ENCODE measurements at regions of chr11 and their contacts with region 1.

Region 1: GRCh38 chr11:102564110-102564509 is 33.6 kb upstream of the MMP7 start:
- DNase-seq: peak in 1 of 2 experiments; percentile 96
- H3K4me3 ChIP-seq: no peak overlapping the region
- H3K27ac ChIP-seq: peak overlapping the region; percentile 94
- H3K4me1 ChIP-seq: peaks cover 16% of the 10 kb centered on the region
- H3K27me3 ChIP-seq: no peaks in the 10 kb centered on the region
- CTCF ChIP-seq: no peak

Region 2: GRCh38 chr11:102546923-102547471 is 17.1 kb before region 1 on chr11:
- CTCF ChIA-PET with region 1: interaction called, 18 read pairs
- POLR2A ChIA-PET with region 1: no interaction called
- intact Hi-C with region 1: loop called (anchors 1 kb)
- DNase-seq: no peak
- H3K4me3 ChIP-seq: no peak overlapping the region
- H3K27ac ChIP-seq: no peak overlapping the region
- H3K4me1 ChIP-seq: peaks cover 39% of the 10 kb centered on the region
- H3K27me3 ChIP-seq: no peaks in the 10 kb centered on the region
- CTCF ChIP-seq: no peak

Region 3: GRCh38 chr11:102553835-102554282 is 10.3 kb before region 1 on chr11:
- CTCF ChIA-PET with region 1: no interaction called
- POLR2A ChIA-PET with region 1: no interaction called
- intact Hi-C with region 1: loop called (anchors 1 kb)
- DNase-seq: peak in 1 of 2 experiments; percentile 83
- H3K4me3 ChIP-seq: no peak overlapping the region; the same call in 1 of the 2 replicates
- H3K27ac ChIP-seq: peak overlapping the region; percentile 95
- H3K4me1 ChIP-seq: peaks cover 53% of the 10 kb centered on the region
- H3K27me3 ChIP-seq: no peaks in the 10 kb centered on the region
- CTCF ChIP-seq: no peak

Region 4: DNA sequence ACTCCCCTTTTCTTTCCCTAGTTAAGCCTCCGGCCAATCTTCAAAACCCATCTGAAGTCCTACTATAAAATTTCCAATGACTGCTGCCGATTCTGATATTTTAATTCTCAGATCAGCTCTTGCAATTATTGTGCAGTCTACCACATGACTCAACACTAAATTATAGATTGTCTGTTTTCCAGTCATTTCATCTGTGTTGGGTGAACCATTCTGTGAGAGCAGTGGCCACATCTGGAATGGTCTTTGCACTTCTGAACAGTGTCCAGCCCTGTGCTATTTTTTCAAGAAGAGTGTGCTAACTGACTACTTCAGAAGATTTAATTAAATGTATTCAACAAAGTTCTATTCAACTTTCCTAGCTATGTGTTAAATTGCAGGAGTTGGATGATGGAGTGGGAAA is 13.6 kb after region 1 on chr11:
- CTCF ChIA-PET with region 1: no interaction called
- POLR2A ChIA-PET with region 1: interaction called, 14 read pairs
- intact Hi-C with region 1: no loop called
- DNase-seq: no peak
- H3K4me3 ChIP-seq: no peak overlapping the region
- H3K27ac ChIP-seq: no peak overlapping the region
- H3K4me1 ChIP-seq: peaks cover 9% of the 10 kb centered on the region
- H3K27me3 ChIP-seq: no peaks in the 10 kb centered on the region
- CTCF ChIP-seq: no peak

Region 5: DNA sequence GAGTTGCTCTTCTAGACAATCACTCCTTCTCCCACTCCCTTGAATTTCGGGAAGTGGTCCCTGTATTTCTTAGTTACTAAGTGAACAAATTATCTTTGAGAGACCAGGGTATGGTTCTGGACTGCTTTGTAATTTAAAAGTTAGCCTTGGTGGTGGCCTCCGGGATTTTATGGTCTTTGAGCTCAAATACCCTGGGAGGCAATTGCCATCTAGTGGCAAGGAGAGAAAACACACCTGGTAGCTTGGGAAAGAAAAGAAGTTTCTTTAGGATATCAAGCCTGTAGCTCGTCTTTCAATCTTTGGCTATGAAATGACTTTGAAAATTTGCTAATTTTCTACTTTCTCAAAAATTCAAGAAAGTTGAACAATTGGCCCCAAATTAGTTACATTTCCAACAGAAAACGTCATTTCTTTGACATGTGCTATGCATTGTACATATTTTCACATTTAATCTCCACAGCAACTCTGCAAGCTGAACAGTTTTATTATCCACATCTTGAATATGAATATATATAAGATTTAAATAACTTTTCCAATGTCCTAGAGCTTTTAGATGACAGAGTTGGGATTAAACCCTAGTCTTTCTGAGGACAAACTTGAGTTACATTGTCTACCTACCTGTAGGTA is 102.3 kb after region 1 on chr11:
- CTCF ChIA-PET with region 1: no interaction called
- POLR2A ChIA-PET with region 1: no interaction called
- intact Hi-C with region 1: no loop called
- DNase-seq: peak; percentile 22 to 46
- H3K4me3 ChIP-seq: no peak overlapping the region
- H3K27ac ChIP-seq: no peak overlapping the region
- H3K4me1 ChIP-seq: no peaks in the 10 kb centered on the region
- H3K27me3 ChIP-seq: no peaks in the 10 kb centered on the region
- CTCF ChIP-seq: peak; percentile 96

Measured in PC-9 (cell line).